ENCODE measurements at regions of chr18 and their contacts with region 1.

Region 1: GRCh38 chr18:63216516-63217311 is 102.9 kb downstream of the BCL2 start:
- DNase-seq: peak; percentile 79
- H3K4me3 Mint-ChIP-seq: peak overlapping the region; percentile 78
- H3K27ac Mint-ChIP-seq: peak overlapping the region; percentile 90
- H3K4me1 Mint-ChIP-seq: peaks cover 79% of the 10 kb centered on the region
- H3K27me3 Mint-ChIP-seq: no peaks in the 10 kb centered on the region

Region 2: GRCh38 chr18:62018034-62018758 is 1198.5 kb before region 1 on chr18:
- intact Hi-C with region 1: no loop called
- DNase-seq: no peak
- H3K4me3 Mint-ChIP-seq: no peak overlapping the region
- H3K27ac Mint-ChIP-seq: no peak overlapping the region
- H3K4me1 Mint-ChIP-seq: no peaks in the 10 kb centered on the region
- H3K27me3 Mint-ChIP-seq: peaks cover 8% of the 10 kb centered on the region

Region 3: DNA sequence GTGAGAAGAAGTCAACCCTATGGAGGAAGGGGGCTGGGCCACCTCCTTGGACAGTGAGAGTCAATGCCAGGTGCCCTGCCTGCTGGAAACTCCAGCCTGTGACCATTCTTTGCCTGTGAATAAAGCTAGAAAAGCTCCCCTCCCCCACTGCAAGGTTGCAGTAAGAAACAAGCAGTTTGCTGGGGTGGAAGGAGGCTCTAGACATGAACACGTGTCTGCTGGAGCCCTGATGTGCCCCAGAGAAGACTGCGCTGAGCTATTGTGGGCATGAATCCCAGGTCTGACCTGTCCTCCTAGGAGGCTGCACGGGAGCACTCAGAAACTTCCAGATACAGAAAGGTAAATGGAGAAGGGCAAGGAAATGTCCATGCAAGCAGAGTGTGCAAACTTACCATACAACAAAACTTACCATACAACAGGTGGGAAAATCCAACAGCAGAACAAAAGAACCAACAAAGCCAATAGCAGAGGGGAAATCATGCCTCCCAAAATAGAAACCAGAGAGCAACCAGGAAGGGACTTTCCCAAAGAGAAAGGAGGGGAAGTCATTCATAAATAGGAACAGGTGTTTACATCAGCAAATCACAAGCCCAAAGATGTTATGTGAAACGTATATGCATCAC is 175.8 kb before region 1 on chr18:
- intact Hi-C with region 1: loop called (anchors 2 kb)
- DNase-seq: peak; percentile 65
- H3K4me3 Mint-ChIP-seq: peak overlapping the region; percentile 57
- H3K27ac Mint-ChIP-seq: peak overlapping the region; percentile 81
- H3K4me1 Mint-ChIP-seq: peaks cover 24% of the 10 kb centered on the region
- H3K27me3 Mint-ChIP-seq: peaks cover 19% of the 10 kb centered on the region

Region 4: DNA sequence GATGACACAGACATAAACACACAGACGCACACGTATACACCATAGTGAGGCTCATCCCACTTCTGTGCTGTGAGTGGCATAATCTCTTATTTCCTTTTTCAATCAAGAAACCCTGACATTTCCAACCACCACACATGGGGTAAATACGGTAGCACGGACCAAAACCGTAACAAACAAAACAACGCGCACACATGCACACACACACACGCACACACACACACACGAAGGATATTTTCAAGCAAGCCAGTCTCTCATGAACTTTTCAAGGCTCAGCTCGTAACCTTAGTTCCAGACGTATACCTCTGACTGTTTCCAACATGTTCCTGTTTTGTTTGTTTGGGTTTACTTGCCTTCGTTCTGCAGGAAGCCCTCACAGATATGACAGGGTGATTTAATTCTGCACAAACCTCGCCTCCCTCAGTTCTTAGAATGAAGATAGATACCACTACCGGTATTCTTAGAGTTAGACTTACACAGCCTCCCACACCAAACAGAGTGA is 16.9 kb before region 1 on chr18:
- intact Hi-C with region 1: loop called (anchors 1 kb)
- DNase-seq: peak; percentile 90
- H3K4me3 Mint-ChIP-seq: no peak overlapping the region
- H3K27ac Mint-ChIP-seq: no peak overlapping the region
- H3K4me1 Mint-ChIP-seq: peaks cover 31% of the 10 kb centered on the region
- H3K27me3 Mint-ChIP-seq: no peaks in the 10 kb centered on the region

Region 5: DNA sequence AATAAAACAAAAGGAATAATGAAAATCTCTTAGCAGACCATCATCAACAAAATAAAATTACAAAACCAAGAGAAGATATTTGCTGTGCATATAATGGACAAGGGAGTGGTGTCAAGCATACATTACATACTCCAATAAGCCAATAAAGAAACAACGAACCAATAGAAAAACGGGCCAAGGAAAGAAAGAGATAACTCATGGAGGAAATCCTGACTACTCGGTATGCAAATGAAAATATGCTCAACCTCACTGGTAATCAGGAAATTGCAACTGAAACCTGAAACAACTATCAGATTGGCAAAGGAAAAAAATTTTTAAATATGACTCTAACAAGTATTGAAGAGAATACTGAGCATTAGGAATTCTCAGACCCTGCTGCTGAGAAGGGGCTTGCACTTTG is 18.1 kb after region 1 on chr18:
- intact Hi-C with region 1: loop called (anchors 1 kb)
- DNase-seq: no peak
- H3K4me3 Mint-ChIP-seq: peak overlapping the region; percentile 65
- H3K27ac Mint-ChIP-seq: peak overlapping the region; percentile 91
- H3K4me1 Mint-ChIP-seq: peaks cover 70% of the 10 kb centered on the region
- H3K27me3 Mint-ChIP-seq: no peaks in the 10 kb centered on the region

Region 6: DNA sequence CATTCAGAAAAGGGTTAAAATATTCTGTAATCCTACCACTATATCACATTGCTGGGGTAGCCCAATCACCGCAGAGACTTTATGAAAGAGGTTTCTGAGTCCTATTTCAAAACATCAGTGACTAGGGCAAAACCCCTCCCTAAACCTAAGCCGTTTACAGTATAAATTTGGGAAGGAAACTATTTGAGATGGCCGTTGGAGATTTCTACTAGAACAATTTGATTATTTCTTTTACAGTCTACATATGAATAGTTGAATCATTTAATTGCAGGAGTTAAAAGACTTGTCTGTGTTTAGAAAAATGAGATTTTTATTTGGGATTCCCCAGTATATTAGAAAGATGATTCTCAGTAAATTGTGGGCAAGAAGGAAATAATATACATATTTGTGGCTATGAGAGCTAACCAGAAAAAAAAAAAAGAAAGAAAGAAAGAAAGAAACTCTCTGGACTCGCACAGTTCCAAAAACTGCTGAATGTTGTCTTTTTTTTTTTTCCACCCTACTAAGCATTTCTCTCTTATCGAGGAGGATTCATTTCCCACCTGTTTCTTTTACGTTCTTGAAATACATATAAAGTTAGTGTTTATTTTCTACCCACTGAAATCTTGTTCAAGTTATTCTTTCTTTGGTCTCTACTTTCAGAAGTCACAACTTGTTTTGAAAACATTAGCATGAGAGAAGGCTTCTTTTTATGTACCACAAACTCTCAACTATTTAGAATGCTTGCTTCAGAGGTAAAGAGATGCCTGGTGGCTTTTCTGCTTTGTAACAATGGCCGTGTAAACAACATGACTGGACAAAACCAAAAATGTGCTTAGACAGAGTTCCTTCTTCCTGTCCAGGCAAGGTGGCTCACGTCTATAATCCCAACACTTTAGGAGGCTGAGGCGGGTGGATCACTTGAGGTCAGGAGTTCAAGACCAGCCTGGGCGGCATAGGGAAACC is 37.0 kb after region 1 on chr18:
- intact Hi-C with region 1: loop called (anchors 5 kb)
- DNase-seq: no peak
- H3K4me3 Mint-ChIP-seq: peak overlapping the region; percentile 29
- H3K27ac Mint-ChIP-seq: peak overlapping the region; percentile 64
- H3K4me1 Mint-ChIP-seq: peaks cover 68% of the 10 kb centered on the region
- H3K27me3 Mint-ChIP-seq: no peaks in the 10 kb centered on the region

Region 7: DNA sequence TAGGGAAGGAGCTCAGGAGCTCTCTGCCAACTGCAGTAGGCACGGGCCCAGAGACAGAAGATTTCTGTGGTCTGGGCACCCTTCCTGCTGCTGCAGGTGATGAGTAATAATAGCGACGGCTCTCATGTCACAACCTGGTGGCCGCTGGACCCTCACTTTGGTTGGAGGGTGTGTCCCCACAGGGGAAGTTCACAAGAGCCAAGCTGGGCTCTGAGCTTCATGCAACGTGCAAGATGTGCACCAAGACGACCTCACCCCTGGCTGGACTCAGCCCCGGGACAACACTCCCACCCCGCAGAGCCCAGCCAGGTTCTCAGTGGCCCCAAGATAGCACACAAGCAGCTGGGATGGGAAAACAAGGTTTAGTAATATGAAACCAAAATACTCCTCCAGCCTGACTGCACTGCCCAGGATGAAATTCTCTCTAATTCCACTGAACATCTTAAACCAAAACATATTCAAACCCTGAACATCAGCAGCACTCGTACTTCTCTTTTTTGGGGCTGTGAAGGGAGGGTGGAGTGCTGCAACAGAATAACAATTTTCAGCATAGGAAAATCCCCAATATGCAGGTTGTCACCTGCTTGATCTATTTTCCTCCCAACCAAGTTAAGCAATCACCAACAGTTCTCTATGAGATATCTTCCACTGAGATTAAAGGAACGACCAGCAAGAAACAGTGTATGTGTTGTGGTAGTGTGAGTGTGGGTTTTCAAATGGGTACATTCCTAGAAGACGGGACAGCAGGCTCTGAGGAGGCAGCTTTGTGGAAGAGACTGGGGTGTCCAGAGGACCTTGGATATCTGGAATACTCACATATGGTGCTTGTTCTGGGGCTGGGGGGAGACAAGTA is 76.3 kb after region 1 on chr18:
- intact Hi-C with region 1: loop called (anchors 2 kb)
- DNase-seq: no peak
- H3K4me3 Mint-ChIP-seq: peak overlapping the region; percentile 56
- H3K27ac Mint-ChIP-seq: peak overlapping the region; percentile 83
- H3K4me1 Mint-ChIP-seq: peaks cover 62% of the 10 kb centered on the region
- H3K27me3 Mint-ChIP-seq: no peaks in the 10 kb centered on the region

Region 8: GRCh38 chr18:63299837-63300745 is 83.4 kb after region 1 on chr18:
- intact Hi-C with region 1: loop called (anchors 1 kb)
- DNase-seq: peak; percentile 81
- H3K4me3 Mint-ChIP-seq: peak overlapping the region; percentile 81
- H3K27ac Mint-ChIP-seq: peak overlapping the region; percentile 98
- H3K4me1 Mint-ChIP-seq: peaks cover 81% of the 10 kb centered on the region
- H3K27me3 Mint-ChIP-seq: no peaks in the 10 kb centered on the region

Region 9: DNA sequence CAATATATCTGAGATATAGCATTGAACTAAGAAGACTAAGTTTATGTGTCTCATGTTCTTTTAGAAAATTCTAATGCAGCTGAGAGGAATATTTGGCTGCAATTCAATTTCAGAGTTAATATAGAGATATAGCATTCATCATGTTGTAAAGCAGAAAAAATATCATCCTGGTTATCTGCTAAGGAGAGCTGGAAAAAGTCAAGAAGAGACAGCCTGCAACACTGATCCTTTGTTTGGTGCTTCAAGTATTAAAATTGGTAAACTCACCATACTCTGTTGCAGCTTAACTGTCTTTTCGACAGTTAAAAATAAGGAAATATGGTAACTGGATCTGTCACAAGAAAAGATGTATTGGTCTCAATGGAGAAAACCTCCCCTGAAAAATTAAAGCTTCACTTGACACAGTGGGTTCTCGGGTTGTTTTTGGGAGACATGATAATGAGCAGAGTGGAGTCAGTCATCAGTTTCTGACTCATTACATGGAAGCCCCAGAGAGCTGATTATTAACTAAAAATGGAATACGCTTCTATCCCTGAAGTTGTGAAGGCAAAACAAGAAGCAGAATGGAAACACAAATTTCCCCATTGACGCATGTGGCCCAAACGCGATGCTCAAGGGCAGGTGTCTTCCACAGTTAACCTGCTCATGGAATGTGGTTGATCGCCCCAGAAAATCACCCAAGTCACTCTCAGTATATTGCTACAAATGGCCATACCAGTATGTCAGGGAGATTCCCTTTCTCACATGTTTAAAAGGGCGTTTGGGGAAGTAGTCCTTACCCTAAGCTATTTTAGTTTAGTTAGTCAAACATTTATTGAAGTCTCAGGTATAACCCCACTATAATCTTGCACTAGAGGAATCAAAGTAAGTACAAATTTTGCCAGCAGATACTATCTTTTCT is 94.7 kb after region 1 on chr18:
- intact Hi-C with region 1: no loop called
- DNase-seq: no peak
- H3K4me3 Mint-ChIP-seq: no peak overlapping the region
- H3K27ac Mint-ChIP-seq: peak overlapping the region; percentile 39
- H3K4me1 Mint-ChIP-seq: peaks cover 70% of the 10 kb centered on the region
- H3K27me3 Mint-ChIP-seq: no peaks in the 10 kb centered on the region

Measured in activated CD4-positive, alpha-beta T cell treated with anti-CD3 and anti-CD28 coated beads, Interleukin-2, amount 10 ng/mL, durations not matched to agents 24 days and 14 days (primary cell).